Caco-2 (cell line): ENCODE measurements at regions of chr2 and their contacts with region 1.

Region 1: DNA sequence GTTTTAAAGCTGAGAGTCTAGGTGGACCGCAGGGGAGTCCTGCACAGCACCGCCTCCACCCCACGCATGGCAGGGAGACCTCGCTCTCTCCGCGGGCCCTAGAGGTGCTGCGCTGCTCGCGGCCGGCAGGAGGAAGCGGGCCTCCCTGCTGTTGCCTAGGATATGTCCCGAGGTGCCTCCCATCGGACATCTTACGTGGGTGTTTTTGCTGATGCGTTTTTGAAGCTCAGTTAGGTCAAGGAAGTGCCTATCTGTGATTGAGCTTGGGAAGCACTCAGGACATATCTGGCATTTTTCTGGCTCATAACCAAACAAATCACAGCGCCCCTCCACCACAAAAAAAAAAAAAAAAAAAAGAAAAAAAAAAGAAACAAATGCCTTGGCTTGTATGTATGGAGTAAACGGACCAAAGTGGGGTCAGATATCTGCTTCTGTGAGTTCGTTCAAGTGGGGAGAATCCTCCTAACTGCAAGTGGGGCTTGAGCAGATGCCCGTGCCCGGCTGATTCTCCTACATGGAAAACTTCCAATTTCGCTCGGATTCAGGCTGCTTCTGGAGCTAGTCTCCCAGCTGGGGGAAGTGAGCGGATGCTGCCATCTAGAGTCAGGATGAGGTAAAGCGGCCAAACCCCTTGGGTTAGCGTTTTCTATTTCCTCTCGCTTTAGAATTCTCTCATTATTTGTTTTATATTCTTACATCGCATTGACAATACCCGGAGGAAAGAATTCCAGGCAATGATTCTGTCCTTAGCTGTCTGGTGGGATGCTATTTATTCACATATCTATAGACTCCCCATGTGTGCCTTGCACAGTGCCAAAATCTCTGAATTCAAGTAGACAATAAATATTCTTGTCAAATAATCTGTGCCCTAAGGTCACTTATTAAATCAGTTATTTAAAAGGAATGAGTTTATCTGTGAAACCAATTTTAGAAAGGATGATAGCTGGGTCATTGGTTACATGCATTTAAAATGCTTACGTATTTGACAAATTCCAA is 95.3 kb downstream of the CD8B2 start:
- DNase-seq: peak; percentile 76 to 80
- H3K4me3 ChIP-seq: no peak overlapping the region
- H3K4me3 Mint-ChIP-seq: peak overlapping the region; percentile 55
- H3K27ac Mint-ChIP-seq: no peak overlapping the region
- H3K4me1 ChIP-seq: no peaks in the 10 kb centered on the region
- H3K4me1 Mint-ChIP-seq: peaks cover 7% of the 10 kb centered on the region
- H3K27me3 ChIP-seq: no peaks in the 10 kb centered on the region
- H3K27me3 Mint-ChIP-seq: peaks cover 11% of the 10 kb centered on the region
- CTCF ChIP-seq: peak; percentile 84 to 93

Region 2: DNA sequence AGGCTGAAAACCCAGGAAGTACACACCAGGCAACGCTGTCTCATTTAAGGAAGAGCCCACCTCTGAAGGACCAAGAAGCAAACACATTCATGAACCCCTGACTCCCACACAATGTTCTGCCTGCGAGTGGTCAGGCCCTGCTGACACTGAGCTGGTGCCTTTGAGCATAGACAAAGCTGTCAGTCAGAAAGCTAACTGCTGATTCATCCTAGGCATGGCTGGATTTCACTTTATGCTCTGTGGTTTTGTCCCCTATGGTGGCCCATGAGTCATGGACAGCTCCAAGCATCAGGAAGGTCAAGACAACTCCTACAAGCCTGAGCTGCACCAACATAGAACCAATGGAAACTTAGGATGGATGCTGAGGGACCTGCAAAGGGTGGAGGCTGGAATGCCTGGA is 467.2 kb before region 1 on chr2:
- CTCF ChIA-PET with region 1: no interaction called
- POLR2A ChIA-PET with region 1: no interaction called
- intact Hi-C with region 1: no loop called
- DNase-seq: no peak
- H3K4me3 ChIP-seq: no peak overlapping the region
- H3K4me3 Mint-ChIP-seq: no peak overlapping the region
- H3K27ac Mint-ChIP-seq: no peak overlapping the region
- H3K4me1 ChIP-seq: peaks cover 14% of the 10 kb centered on the region
- H3K4me1 Mint-ChIP-seq: peaks cover 7% of the 10 kb centered on the region
- H3K27me3 ChIP-seq: no peaks in the 10 kb centered on the region
- H3K27me3 Mint-ChIP-seq: no peaks in the 10 kb centered on the region
- CTCF ChIP-seq: no peak

Region 3: GRCh38 chr2:106542811-106543259 is 39.6 kb before region 1 on chr2:
- CTCF ChIA-PET with region 1: no interaction called
- POLR2A ChIA-PET with region 1: no interaction called
- intact Hi-C with region 1: loop called (anchors 1 kb)
- DNase-seq: peak; percentile 72 to 82
- H3K4me3 ChIP-seq: peak overlapping the region; percentile 17; the same call in 1 of the 2 replicates
- H3K4me3 Mint-ChIP-seq: peak overlapping the region; percentile 61
- H3K27ac Mint-ChIP-seq: no peak overlapping the region
- H3K4me1 ChIP-seq: no peaks in the 10 kb centered on the region
- H3K4me1 Mint-ChIP-seq: no peaks in the 10 kb centered on the region
- H3K27me3 ChIP-seq: no peaks in the 10 kb centered on the region
- H3K27me3 Mint-ChIP-seq: peaks cover 12% of the 10 kb centered on the region
- CTCF ChIP-seq: peak; percentile 92

Region 4: GRCh38 chr2:106562268-106563186 is 19.9 kb before region 1 on chr2:
- CTCF ChIA-PET with region 1: interaction called, 39 read pairs
- POLR2A ChIA-PET with region 1: no interaction called
- intact Hi-C with region 1: loop called (anchors 1 kb)
- DNase-seq: no peak
- H3K4me3 ChIP-seq: no peak overlapping the region
- H3K4me3 Mint-ChIP-seq: no peak overlapping the region
- H3K27ac Mint-ChIP-seq: no peak overlapping the region
- H3K4me1 ChIP-seq: peaks cover 3% of the 10 kb centered on the region; the same call in 1 of the 2 replicates
- H3K4me1 Mint-ChIP-seq: peaks cover 5% of the 10 kb centered on the region
- H3K27me3 ChIP-seq: no peaks in the 10 kb centered on the region
- H3K27me3 Mint-ChIP-seq: peaks cover 13% of the 10 kb centered on the region
- CTCF ChIP-seq: no peak